Naive thymus-derived CD4-positive, alpha-beta T cell (primary cell): ENCODE measurements at regions of chr16 and their contacts with region 1.

Region 1: GRCh38 chr16:68843482-68844210 is at the start of gene TANGO6:
- DNase-seq: peak; percentile 83 to 94 (median 89)
- ATAC-seq: peak; percentile 98
- H3K4me3 ChIP-seq: peak within 1 kb of the TSS; percentile 86
- H3K4me3 Mint-ChIP-seq: peak within 1 kb of the TSS; percentile 81 to 99 (median 88)
- H3K27ac ChIP-seq: peak within 1 kb of the TSS; percentile 85
- H3K27ac Mint-ChIP-seq: peak within 1 kb of the TSS; percentile 69 to 97 (median 90)
- H3K4me1 ChIP-seq: peaks cover 7 to 15% of the 10 kb centered on the region in 2 donors
- H3K4me1 Mint-ChIP-seq: peaks cover 20 to 41% (median 30%) of the 10 kb centered on the region in 7 donors
- H3K27me3 ChIP-seq: no peaks in the 10 kb centered on the region
- H3K27me3 Mint-ChIP-seq: no peaks in the 10 kb centered on the region
- total RNA-seq, gene TANGO6: 23.9 to 40.4 (median 36.6) TPM

Region 2: GRCh38 chr16:66934153-66934838 is 1909.3 kb before region 1 on chr16 and contains the start of gene CIAO2B:
- CTCF ChIA-PET with region 1: no interaction called
- POLR2A ChIA-PET with region 1: no interaction called
- intact Hi-C with region 1: loop called in 1 of 2 experiments (anchors 10 kb)
- DNase-seq: peak; percentile 86 to 95 (median 91)
- ATAC-seq: peak; percentile 93
- H3K4me3 ChIP-seq: peak within 1 kb of the TSS; percentile 96
- H3K4me3 Mint-ChIP-seq: peak within 1 kb of the TSS; percentile 91 to 99 (median 98)
- H3K27ac ChIP-seq: peak within 1 kb of the TSS; percentile 97
- H3K27ac Mint-ChIP-seq: peak within 1 kb of the TSS; percentile 96 to 99 (median 98)
- H3K4me1 ChIP-seq: peaks cover 24 to 35% of the 10 kb centered on the region in 2 donors
- H3K4me1 Mint-ChIP-seq: peaks cover 38 to 63% (median 54%) of the 10 kb centered on the region in 7 donors
- H3K27me3 ChIP-seq: no peaks in the 10 kb centered on the region
- H3K27me3 Mint-ChIP-seq: no peaks in the 10 kb centered on the region
- total RNA-seq, gene CIAO2B: 47.0 to 116 (median 58.5) TPM

Region 3: DNA sequence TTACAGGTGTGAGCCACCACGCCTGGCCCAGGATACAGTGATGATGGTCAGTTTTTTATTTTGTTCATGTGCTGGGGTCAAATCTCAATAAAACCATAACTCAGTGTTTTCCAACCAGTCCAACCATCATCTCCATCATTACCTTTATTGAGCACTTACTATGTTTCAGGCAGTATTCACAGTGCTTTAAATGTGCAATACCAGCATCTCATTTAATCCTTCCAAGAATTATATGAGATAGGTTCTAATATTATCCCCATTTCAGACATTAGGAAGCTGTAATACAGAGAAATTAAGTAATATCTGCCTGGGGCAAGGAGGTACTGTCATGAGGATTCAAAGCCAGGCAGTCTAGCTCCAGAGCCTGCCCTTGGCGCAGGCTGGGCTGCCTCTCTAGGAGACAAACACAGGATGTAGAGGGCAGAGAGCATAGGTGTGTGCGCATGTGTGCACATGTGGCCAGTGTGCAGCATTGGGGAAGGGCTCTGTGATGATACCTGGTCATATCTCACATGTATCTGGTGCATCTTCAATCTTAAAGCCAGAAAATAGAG is 37.1 kb before region 1 on chr16:
- CTCF ChIA-PET with region 1: no interaction called
- POLR2A ChIA-PET with region 1: no interaction called
- intact Hi-C with region 1: no loop called
- DNase-seq: no peak
- ATAC-seq: no peak
- H3K4me3 ChIP-seq: no peak overlapping the region
- H3K4me3 Mint-ChIP-seq: no peak overlapping the region
- H3K27ac ChIP-seq: no peak overlapping the region
- H3K27ac Mint-ChIP-seq: no peak overlapping the region
- H3K4me1 ChIP-seq: no peaks in the 10 kb centered on the region
- H3K4me1 Mint-ChIP-seq: no peaks in the 10 kb centered on the region
- H3K27me3 ChIP-seq: no peaks in the 10 kb centered on the region
- H3K27me3 Mint-ChIP-seq: peaks cover 0 to 6% (median 0%) of the 10 kb centered on the region in 5 donors

Region 4: GRCh38 chr16:68860978-68861892 is 17.6 kb after region 1 on chr16:
- CTCF ChIA-PET with region 1: no interaction called
- POLR2A ChIA-PET with region 1: no interaction called
- intact Hi-C with region 1: no loop called
- DNase-seq: no peak
- ATAC-seq: no peak
- H3K4me3 ChIP-seq: no peak overlapping the region
- H3K4me3 Mint-ChIP-seq: no peak overlapping the region
- H3K27ac ChIP-seq: no peak overlapping the region
- H3K27ac Mint-ChIP-seq: peak overlapping the region in 1 of 9 donors; percentile 76
- H3K4me1 ChIP-seq: no peaks in the 10 kb centered on the region
- H3K4me1 Mint-ChIP-seq: peaks cover 0 to 33% (median 20%) of the 10 kb centered on the region in 7 donors
- H3K27me3 ChIP-seq: no peaks in the 10 kb centered on the region
- H3K27me3 Mint-ChIP-seq: no peaks in the 10 kb centered on the region

Region 5: DNA sequence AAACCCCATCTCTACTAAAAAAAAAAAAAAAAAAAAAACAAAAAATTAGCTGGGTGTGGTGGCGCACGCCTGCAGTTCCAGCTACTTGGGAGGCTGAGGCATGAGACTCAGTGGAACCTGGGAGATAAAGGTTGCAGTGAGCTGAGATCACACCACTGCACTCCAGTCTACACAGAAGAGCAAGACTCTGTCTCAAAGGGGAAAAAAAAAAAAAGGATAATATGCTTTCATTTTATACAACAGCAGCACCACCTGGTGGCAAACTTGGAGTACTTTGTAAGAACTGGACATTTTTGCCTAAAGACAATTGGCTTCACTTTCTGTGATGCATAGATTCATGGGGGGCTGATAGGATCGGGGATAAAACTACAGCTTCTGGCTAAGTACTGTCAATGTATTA is 280.3 kb after region 1 on chr16:
- CTCF ChIA-PET with region 1: no interaction called
- POLR2A ChIA-PET with region 1: no interaction called
- intact Hi-C with region 1: loop called (anchors 1 kb)
- DNase-seq: peak in 8 of 9 donors; percentile 30 to 77 (median 68)
- ATAC-seq: peak; percentile 89
- H3K4me3 ChIP-seq: no peak overlapping the region
- H3K4me3 Mint-ChIP-seq: no peak overlapping the region
- H3K27ac ChIP-seq: no peak overlapping the region
- H3K27ac Mint-ChIP-seq: peak overlapping the region in 3 of 9 donors; percentile 22 to 60 (median 28)
- H3K4me1 ChIP-seq: peaks cover 0 to 4% of the 10 kb centered on the region in 2 donors
- H3K4me1 Mint-ChIP-seq: peaks cover 10 to 33% (median 23%) of the 10 kb centered on the region in 7 donors
- H3K27me3 ChIP-seq: no peaks in the 10 kb centered on the region
- H3K27me3 Mint-ChIP-seq: no peaks in the 10 kb centered on the region

Region 6: GRCh38 chr16:69286941-69287713 is 443.5 kb after region 1 on chr16:
- CTCF ChIA-PET with region 1: no interaction called
- POLR2A ChIA-PET with region 1: no interaction called
- intact Hi-C with region 1: loop called (anchors 1 to 10 kb)
- DNase-seq: peak in 7 of 9 donors; percentile 38 to 73 (median 65)
- ATAC-seq: peak; percentile 63
- H3K4me3 ChIP-seq: no peak overlapping the region
- H3K4me3 Mint-ChIP-seq: no peak overlapping the region
- H3K27ac ChIP-seq: no peak overlapping the region
- H3K27ac Mint-ChIP-seq: no peak overlapping the region
- H3K4me1 ChIP-seq: no peaks in the 10 kb centered on the region
- H3K4me1 Mint-ChIP-seq: peaks cover 0 to 2% (median 0%) of the 10 kb centered on the region in 7 donors
- H3K27me3 ChIP-seq: no peaks in the 10 kb centered on the region
- H3K27me3 Mint-ChIP-seq: no peaks in the 10 kb centered on the region

Region 7: GRCh38 chr16:69330286-69331109 is 486.9 kb after region 1 on chr16 and contains the start of gene PDF:
- CTCF ChIA-PET with region 1: no interaction called
- POLR2A ChIA-PET with region 1: interaction called, 4 read pairs
- intact Hi-C with region 1: loop called in 1 of 2 experiments (anchors 5 kb)
- DNase-seq: peak; percentile 61 to 91 (median 72)
- ATAC-seq: peak; percentile 97
- H3K4me3 ChIP-seq: peak within 1 kb of the TSS; percentile 64
- H3K4me3 Mint-ChIP-seq: peak within 1 kb of the TSS; percentile 69 to 87 (median 76)
- H3K27ac ChIP-seq: peak within 1 kb of the TSS; percentile 90
- H3K27ac Mint-ChIP-seq: peak within 1 kb of the TSS; percentile 36 to 80 (median 62)
- H3K4me1 ChIP-seq: peaks cover 13 to 37% of the 10 kb centered on the region in 2 donors
- H3K4me1 Mint-ChIP-seq: peaks cover 16 to 72% (median 54%) of the 10 kb centered on the region in 7 donors
- H3K27me3 ChIP-seq: no peaks in the 10 kb centered on the region
- H3K27me3 Mint-ChIP-seq: no peaks in the 10 kb centered on the region
- total RNA-seq, gene PDF: 4.6 to 11.8 (median 9.5) TPM

Region 8: DNA sequence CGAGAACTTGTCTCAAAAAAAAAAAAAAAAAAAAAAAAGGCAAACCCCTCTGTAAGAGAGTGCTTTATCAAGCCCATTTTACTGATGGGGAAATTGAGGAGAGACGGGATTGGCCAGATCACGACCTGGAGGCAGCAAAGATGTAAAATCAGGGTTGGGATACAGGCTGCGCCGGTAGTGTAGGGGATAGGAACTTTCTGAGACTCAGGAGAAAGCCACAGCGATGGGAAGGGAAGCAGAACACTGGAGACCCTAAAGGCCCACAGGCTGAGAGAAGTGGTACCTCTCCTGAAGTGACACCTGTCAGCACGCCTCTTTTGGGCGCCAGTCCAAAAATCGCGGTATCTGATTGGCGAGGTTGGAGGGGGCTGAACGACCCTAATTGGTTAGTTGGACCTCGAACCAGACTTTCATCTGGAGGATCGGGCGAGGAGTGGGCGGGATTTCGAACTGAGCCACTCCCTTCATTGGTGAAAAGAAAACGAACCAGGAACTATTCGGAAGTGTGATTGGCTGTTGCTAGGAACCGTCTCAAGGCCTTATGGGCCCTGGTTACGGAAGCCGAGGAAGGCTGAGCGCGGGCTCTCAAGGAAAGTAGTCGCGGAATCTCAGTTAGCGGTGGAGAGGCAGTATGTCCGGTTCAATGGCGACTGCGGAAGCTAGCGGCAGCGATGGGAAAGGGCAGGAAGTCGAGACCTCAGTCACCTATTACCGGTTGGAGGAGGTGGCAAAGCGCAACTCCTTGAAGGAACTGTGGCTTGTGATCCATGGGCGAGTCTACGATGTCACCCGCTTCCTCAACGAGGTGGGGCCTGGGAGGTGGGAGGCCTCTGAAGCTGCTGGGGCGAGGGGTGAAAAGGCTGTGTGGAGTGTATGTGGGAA is 580.6 kb after region 1 on chr16 and contains the start of gene CYB5B:
- CTCF ChIA-PET with region 1: no interaction called
- POLR2A ChIA-PET with region 1: no interaction called
- intact Hi-C with region 1: loop called in 1 of 2 experiments (anchors 1 kb)
- DNase-seq: peak; percentile 72 to 98 (median 96)
- ATAC-seq: peak; percentile 98
- H3K4me3 ChIP-seq: peak within 1 kb of the TSS; percentile 84
- H3K4me3 Mint-ChIP-seq: peak within 1 kb of the TSS; percentile 92 to 99 (median 97)
- H3K27ac ChIP-seq: peak within 1 kb of the TSS; percentile 83
- H3K27ac Mint-ChIP-seq: peak within 1 kb of the TSS; percentile 89 to 98 (median 93)
- H3K4me1 ChIP-seq: peaks cover 0 to 13% of the 10 kb centered on the region in 2 donors
- H3K4me1 Mint-ChIP-seq: peaks cover 12 to 49% (median 37%) of the 10 kb centered on the region in 7 donors
- H3K27me3 ChIP-seq: no peaks in the 10 kb centered on the region
- H3K27me3 Mint-ChIP-seq: no peaks in the 10 kb centered on the region
- total RNA-seq, gene CYB5B: 29.6 to 148 (median 48.2) TPM